OCI-LY7 (cell line): ENCODE measurements at regions of chr1 and their contacts with region 1.

Region 1: DNA sequence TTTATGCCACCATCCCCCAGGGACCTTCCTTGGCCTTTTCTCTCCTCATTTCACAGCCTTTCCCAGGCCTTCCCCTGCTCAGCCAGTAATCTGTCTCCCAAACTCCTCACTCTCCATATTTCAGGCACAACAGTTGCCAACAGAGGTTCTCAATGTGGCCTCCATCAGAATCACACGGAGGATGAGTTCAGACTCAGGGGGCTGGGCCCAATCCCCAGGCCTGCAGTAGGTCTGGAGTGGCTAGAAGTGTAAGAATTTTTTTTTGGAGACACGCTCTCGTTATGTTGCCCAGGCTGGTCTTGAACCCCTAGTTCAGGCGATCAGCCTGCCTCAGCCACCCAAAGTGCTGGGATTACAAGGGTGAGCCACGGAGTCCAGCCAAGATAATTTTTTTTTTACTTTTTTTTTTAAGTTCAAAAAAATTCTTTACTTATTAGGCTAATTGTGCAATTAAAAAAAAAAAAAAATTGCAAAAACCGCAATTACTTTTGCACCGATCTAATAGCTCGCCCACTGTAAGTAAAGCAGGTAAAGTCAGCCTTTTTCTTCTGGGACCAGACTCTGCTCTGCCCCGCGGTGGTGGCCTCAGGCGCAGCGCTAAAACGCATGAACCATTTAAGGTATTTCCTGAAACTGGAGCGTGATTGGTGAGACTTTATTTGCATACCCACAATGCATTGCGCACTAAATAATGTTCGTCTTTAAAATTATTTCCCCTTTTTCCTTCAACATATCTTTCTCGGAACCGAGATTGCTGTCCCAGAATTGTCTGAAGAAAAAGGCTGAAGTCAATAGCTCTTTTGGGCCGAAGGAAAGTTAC is 18.7 kb downstream of the KIAA2013 start:
- DNase-seq: peak; percentile 96
- H3K4me3 ChIP-seq: no peak overlapping the region
- H3K27ac ChIP-seq: peak overlapping the region; percentile 98
- H3K4me1 ChIP-seq: peaks cover 10% of the 10 kb centered on the region
- CTCF ChIP-seq: peak; percentile 97

Region 2: GRCh38 chr1:11823366-11824137 is 83.9 kb before region 1 on chr1:
- CTCF ChIA-PET with region 1: no interaction called
- POLR2A ChIA-PET with region 1: no interaction called
- intact Hi-C with region 1: no loop called
- DNase-seq: no peak
- H3K4me3 ChIP-seq: no peak overlapping the region
- H3K27ac ChIP-seq: no peak overlapping the region
- H3K4me1 ChIP-seq: no peaks in the 10 kb centered on the region
- CTCF ChIP-seq: no peak

Region 3: DNA sequence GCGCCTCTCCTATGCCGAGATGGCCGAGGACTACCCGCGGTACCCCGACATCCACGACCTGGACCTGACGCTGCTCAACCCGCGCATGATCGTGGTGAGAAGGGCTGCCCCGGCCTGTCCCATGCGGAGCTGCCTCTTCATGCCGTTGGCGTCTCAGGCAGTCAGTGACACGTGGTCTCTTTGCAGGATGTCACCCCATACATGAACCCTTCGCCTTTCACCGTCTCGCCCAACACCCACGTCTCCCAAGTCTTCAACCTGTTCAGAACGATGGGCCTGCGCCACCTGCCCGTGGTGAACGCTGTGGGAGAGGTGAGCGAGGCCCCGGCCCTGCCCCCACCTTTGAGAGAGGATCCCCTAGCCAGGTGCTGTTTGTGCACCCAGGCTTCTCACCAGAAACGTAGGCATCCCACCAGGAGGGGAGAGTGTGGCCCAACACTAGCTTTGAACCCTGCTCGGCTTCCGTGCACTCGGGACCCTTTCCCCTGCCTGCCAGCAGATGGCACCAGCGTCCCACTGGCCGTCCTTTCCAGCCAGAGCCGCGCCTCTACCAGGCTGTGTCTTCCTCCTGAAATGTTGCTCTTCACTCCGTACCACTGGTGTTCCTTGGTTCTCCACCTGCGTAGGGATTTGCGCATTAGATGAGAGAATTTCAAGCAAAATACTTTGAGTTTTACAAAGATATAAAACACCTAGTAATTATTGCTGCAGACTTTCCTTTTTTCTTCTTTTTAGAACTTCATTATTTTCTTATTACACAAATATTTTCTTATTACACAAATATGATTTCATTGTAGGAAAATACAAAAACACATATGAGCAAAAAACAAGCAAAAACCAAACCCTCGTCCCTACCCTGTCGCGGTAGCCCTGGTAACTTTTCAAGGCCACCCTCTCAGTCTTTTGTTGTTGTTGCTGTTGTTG is 68.9 kb before region 1 on chr1:
- CTCF ChIA-PET with region 1: interaction called, 3 read pairs
- POLR2A ChIA-PET with region 1: interaction called, 4 read pairs
- intact Hi-C with region 1: loop called (anchors 1 kb)
- DNase-seq: peak; percentile 71
- H3K4me3 ChIP-seq: no peak overlapping the region
- H3K27ac ChIP-seq: no peak overlapping the region
- H3K4me1 ChIP-seq: peaks cover 24% of the 10 kb centered on the region
- CTCF ChIP-seq: peak; percentile 99

Region 4: GRCh38 chr1:11918779-11919519 is 11.5 kb after region 1 on chr1:
- CTCF ChIA-PET with region 1: no interaction called
- POLR2A ChIA-PET with region 1: interaction called, 12 read pairs
- intact Hi-C with region 1: no loop called
- DNase-seq: no peak
- H3K4me3 ChIP-seq: no peak overlapping the region
- H3K27ac ChIP-seq: no peak overlapping the region
- H3K4me1 ChIP-seq: peaks cover 27% of the 10 kb centered on the region
- CTCF ChIP-seq: no peak

Region 5: GRCh38 chr1:11967028-11967547 is 59.6 kb after region 1 on chr1:
- CTCF ChIA-PET with region 1: interaction called, 3 read pairs
- POLR2A ChIA-PET with region 1: interaction called, 44 read pairs
- intact Hi-C with region 1: loop called (anchors 1 kb)
- DNase-seq: peak; percentile 83
- H3K4me3 ChIP-seq: no peak overlapping the region
- H3K27ac ChIP-seq: no peak overlapping the region
- H3K4me1 ChIP-seq: no peaks in the 10 kb centered on the region
- CTCF ChIP-seq: peak; percentile 87

Region 6: DNA sequence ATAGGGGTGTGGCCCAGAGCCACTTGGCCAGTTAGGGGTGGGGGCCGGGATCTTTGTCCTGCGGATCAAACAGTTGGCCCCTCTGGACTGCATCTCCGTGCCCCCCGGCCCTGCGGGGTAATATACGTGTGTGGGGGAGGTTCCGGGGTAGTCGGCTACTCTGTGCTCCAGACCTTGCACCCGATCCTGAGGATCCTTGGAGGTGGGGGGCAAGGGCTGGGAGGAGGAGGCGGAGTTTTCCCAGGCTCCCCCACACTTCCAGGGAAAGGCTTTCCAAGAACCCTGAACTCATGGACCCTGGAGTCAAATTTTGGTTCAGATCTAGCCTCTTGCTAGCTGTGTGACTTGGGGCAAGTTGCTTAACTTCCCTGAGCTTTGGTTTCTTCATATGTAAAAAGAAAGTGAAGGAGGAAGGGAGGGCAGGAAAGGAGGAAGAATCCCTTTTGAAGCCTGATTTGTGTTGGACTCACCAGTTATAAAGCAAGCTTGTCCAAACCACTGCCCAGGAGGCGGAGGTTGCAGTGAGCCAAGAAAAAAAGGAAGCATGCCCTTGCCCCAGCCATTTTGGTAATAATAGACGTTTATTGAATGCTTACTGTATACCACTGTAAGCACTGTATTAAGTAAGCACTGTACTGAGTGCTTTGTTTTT is 112.5 kb after region 1 on chr1:
- CTCF ChIA-PET with region 1: no interaction called
- POLR2A ChIA-PET with region 1: interaction called, 7 read pairs
- intact Hi-C with region 1: loop called (anchors 2 kb)
- DNase-seq: no peak
- H3K4me3 ChIP-seq: peak overlapping the region; percentile 77
- H3K27ac ChIP-seq: peak overlapping the region; percentile 11
- H3K4me1 ChIP-seq: peaks cover 7% of the 10 kb centered on the region
- CTCF ChIP-seq: no peak